PC-3 (cell line): ENCODE measurements at regions of chr14 and their contacts with region 1.

Region 1: DNA sequence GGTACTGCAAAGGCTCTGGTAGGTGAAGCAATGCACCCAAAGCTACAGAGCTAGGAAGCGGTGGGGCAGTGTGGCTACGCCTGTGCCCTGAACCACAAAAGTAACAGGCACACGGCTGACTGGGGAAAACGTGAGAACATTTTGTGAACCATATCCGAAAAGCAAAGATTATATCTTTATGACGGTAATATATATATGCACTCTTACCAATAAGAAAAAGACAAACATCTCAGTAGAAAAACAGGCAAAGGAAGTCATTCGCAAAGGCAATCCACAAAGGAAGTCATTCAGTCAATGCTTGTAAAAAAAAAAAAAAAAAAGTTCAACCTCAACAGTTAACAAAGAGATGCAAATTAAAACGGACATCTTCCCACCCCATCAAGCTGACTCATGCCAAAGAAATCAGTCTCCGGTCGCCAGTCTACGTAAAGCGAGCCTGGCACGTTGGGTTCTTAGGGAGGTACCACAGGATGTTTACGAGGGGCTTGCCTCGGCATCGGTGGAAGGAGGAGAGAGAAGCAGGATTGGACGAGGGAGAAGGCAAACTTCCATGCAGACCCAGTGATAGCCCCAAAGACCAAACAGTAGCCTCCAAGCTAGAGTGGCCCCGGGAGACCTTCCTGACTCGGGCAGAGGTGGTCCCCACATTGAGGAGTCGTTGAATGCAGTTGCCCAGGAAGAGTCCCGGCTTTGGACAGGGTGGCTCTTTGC is 39.4 kb upstream of the PPP2R5C start:
- DNase-seq: peak; percentile 89
- ATAC-seq: peak; percentile 87
- H3K4me3 ChIP-seq: peak overlapping the region; percentile 42
- H3K27ac ChIP-seq: peak overlapping the region; percentile 88
- H3K4me1 ChIP-seq: peaks cover 18% of the 10 kb centered on the region
- H3K27me3 ChIP-seq: no peaks in the 10 kb centered on the region
- CTCF ChIP-seq: no peak

Region 2: DNA sequence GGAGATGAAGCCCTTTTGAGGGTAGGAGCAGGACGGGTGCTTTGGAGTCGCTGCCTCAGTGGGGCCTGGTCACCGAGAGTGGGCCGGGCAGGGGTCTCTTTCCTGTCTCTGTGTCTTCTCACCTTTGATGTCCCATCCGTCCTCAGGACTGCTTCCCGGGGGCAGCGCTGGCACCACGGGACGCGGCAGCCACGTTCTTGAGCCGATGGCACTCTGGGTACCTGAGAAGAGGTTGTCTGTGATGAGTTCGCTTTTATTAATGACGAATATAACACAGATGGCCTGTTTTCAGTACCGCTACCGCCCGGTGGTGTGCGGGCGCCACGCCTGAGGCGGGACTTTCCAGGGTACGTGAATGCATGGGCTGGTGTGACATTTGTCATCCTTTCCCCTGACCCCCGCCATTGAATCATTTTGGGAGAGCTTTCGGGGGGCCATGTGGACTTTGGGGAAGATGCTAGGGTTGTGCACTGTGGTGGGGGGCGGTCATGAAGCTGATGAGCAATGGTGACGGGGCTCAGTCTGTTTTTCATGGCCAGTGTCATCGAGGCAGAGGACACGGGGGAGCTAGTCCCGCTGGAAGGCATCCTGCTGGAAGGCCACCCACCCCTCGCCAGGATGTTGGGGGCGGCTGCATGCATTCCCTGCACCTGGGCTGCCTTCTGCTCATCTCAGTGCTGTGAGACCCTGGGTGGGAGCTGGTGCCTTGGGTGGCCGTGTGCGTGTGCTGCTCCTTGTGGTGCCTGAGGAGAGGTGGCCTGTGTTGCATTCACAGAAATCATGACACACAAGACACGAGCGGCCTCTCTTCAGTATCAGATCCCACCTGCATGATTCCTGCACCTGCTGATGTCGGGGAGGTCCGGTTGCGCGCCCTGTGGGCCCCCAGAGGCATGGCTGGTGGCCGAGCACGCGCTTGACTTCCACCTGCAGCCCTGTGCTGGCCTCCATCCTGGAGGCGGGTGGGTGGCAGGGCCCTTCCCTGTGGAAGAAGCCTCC is 656.1 kb before region 1 on chr14:
- CTCF ChIA-PET with region 1: no interaction called
- POLR2A ChIA-PET with region 1: no interaction called
- intact Hi-C with region 1: no loop called
- DNase-seq: no peak
- ATAC-seq: no peak
- H3K4me3 ChIP-seq: no peak overlapping the region
- H3K27ac ChIP-seq: no peak overlapping the region
- H3K4me1 ChIP-seq: no peaks in the 10 kb centered on the region
- H3K27me3 ChIP-seq: no peaks in the 10 kb centered on the region
- CTCF ChIP-seq: no peak

Region 3: DNA sequence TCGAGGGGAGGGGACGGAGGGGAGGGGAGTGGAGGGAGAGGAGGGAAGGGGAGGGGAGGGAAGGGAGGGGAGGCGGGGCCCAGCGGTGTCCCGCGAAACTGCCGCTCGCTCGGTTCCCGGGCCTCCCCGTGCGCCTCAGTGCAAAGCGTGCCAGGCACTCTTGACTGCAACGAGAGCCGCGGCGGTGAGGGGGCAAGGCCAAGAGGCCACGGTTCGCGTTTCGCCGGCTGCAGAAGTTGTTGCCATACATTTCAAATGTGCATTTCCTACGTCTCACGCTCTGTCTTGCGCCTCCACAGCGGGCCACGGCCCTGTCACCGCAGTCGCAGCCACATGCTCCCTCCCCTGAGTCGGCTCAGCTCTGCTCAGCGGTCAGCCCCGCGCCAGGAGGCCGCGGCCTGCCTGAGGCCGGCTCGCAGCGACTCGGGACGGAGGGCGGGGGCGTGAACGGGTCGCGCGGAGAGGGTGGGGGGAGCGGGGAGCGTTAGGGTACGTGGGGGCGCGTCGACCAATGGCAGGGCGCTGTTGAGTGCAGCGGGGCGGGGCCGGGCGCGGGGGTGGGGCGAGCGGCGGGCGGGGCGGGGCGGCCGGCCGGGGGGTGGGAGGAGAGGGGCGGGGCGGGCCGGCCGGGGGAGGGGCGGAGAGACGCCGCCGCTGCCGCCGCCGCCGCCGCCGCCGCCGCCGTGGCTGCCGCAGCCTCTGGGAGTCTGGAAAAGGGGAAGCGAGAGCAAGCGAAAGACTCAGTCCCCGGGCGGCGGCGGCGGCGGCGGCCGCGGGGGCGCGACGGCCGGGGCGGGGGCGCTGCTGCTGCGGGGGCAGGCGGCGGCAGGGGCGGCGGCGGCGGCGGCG is 39.1 kb after region 1 on chr14 and contains the start of gene PPP2R5C:
- CTCF ChIA-PET with region 1: no interaction called
- POLR2A ChIA-PET with region 1: no interaction called
- intact Hi-C with region 1: loop called (anchors 2 kb)
- DNase-seq: peak; percentile 75
- ATAC-seq: peak; percentile 75
- H3K4me3 ChIP-seq: peak within 1 kb of the TSS; percentile 98
- H3K27ac ChIP-seq: peak within 1 kb of the TSS; percentile 86
- H3K4me1 ChIP-seq: peaks cover 16% of the 10 kb centered on the region
- H3K27me3 ChIP-seq: no peaks in the 10 kb centered on the region
- CTCF ChIP-seq: no peak
- total RNA-seq, gene PPP2R5C: 92.9 and 96.1 TPM in 2 replicates